Activated T-helper 1 cell treated with anti-CD3 and anti-CD28 coated beads, Interleukin-12 subunit alpha, Interleukin-12 subunit beta, Interleukin-2, Interleukin-4 antibody, amounts not matched to agents 30 ng/mL and 10 ng/mL and 1 ng/mL, durations not matched to agents 14 hours and 24 hours and 36 hours (primary cell): ENCODE measurements at regions of chr1 and their contacts with region 1.

Region 1: GRCh38 chr1:235100194-235100772 is 28.4 kb downstream of the TOMM20 start:
- DNase-seq: no peak
- H3K4me3 Mint-ChIP-seq: no peak overlapping the region
- H3K27ac Mint-ChIP-seq: no peak overlapping the region
- H3K4me1 Mint-ChIP-seq: peaks cover 34% of the 10 kb centered on the region
- H3K27me3 Mint-ChIP-seq: no peaks in the 10 kb centered on the region

Region 2: GRCh38 chr1:235113183-235113917 is 13.1 kb after region 1 on chr1:
- intact Hi-C with region 1: no loop called
- DNase-seq: no peak
- H3K4me3 Mint-ChIP-seq: no peak overlapping the region
- H3K27ac Mint-ChIP-seq: no peak overlapping the region
- H3K4me1 Mint-ChIP-seq: peaks cover 21% of the 10 kb centered on the region
- H3K27me3 Mint-ChIP-seq: no peaks in the 10 kb centered on the region

Region 3: DNA sequence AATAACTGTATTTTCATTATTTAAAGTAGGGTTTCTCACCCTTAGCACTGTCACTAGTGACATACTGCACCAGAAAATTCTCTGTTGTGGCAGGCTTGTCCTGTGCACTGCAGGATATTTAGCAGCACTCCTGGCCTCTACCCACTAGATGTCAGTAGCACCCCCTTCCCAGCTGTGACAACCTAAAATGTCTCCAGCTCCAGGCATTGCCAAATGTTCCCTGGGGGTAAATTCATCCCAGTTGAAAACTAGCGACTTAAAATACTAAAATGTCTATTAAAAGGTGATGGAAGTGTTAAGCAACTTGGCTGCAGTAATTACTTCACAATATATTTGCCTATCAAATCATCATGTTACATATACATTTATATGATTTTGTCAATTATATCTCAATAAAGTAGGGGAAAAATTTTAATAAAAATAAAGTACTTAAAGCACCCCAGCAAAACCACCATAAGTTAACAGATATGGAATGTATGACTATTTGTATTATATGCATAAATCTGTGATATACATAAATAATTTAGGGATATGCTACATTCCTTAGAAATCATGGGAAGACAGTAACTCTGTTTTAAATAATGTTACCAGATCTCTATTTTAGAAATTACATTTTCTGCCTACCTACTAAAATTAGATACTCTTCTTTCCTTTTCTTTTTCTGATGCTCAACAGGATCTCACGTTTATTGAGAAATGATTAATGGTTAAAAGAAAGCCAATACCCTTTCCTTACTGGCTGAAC is 153.1 kb after region 1 on chr1:
- intact Hi-C with region 1: loop called (anchors 5 kb)
- DNase-seq: peak; percentile 47
- H3K4me3 Mint-ChIP-seq: no peak overlapping the region
- H3K27ac Mint-ChIP-seq: no peak overlapping the region
- H3K4me1 Mint-ChIP-seq: peaks cover 37% of the 10 kb centered on the region
- H3K27me3 Mint-ChIP-seq: no peaks in the 10 kb centered on the region

Region 4: GRCh38 chr1:235367000-235367908 is 267.0 kb after region 1 on chr1 and contains the start of gene TBCE:
- intact Hi-C with region 1: loop called (anchors 5 kb)
- DNase-seq: peak; percentile 87
- H3K4me3 Mint-ChIP-seq: peak within 1 kb of the TSS; percentile 95
- H3K27ac Mint-ChIP-seq: peak within 1 kb of the TSS; percentile 93
- H3K4me1 Mint-ChIP-seq: peaks cover 34% of the 10 kb centered on the region
- H3K27me3 Mint-ChIP-seq: no peaks in the 10 kb centered on the region
- total RNA-seq, gene TBCE: 29.0 and 29.2 TPM in 2 replicates